ENCODE measurements at regions of chr19 and their contacts with region 1.

Region 1: DNA sequence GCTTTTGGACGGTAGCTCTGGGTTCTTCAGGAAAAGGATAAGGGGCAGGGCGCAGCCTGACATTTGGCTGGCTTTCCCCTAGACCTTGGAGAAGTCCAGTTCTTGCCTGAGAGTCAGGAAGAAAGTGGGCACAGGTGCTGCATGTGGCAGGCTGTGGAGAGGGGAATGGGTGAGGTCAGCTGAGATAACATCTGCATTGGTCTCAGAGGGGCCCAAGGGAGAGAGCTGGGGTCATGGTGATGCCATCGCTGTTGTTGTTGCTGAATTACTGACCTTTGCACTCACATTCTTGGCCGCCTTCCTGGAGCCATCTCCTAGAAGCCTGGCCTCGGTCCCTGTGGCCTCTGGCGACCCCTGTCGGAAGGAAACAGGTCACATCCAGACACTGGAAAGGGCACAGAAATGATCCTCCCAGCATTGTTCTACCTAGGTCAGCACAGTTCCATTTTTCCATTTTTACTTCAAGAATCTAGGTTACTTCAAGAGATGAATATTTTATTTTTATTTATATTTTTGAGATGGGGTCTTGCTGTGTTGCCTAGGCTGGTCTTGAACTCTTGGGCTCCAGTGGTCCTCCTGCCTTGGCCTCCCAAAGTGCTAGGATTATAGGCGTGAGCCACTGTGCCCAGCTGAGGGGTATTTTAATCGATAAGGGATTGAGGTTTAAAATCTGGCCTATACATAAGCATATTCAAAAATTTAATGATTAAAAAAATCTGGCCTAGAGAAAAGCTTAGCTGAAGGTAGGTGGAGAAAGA is 6.5 kb upstream of the LIPE start:
- DNase-seq: peak; percentile 90 to 91
- ATAC-seq: peak; percentile 91 to 96
- H3K4me3 ChIP-seq: no peak overlapping the region
- H3K27ac ChIP-seq: peak overlapping the region; percentile 58 to 75
- H3K4me1 ChIP-seq: peaks cover 21% of the 10 kb centered on the region
- CTCF ChIP-seq: peak; percentile 99
- EP300 ChIP-seq: no peak
- POLR2A ChIP-seq: no peak
- RAD21 ChIP-seq: peak; percentile 92 to 98

Region 2: DNA sequence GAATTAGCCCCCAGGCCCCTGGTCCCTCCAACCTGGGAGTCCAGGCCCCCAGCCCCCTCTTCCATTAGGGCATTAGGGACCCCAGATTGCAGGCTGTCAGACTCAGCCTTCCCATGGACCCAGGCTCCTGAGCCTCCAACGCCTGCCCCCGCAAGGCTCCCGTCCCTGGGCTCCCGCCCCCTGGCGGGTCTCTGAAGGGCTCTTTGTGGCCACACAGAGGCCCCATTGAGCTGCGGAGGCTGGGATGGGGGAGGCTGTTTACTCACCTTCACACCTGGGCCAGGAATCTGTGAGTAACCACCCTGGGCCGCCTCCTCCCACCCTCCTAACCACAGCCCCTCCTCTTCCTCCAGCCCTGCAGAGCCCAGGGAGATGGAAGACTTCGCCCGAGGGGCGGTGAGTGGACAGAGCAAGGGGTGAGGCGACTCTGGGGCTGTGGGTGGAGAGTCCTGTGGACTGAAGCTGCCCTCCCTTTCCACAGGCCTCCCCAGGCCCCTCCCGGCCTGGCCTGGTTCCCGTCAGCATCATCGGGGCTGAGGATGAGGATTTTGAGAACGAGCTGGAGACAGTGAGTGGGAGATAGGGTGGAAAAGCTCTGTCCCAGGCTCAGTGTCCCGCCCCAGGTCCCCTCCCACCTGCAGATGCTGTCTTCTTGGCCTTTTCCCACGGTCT is 545.8 kb before region 1 on chr19:
- CTCF ChIA-PET with region 1: no interaction called
- POLR2A ChIA-PET with region 1: no interaction called
- DNase-seq: no peak
- ATAC-seq: no peak
- H3K4me3 ChIP-seq: no peak overlapping the region
- H3K27ac ChIP-seq: 0 out of 6 replicates have a peak overlapping the region, but pooled peaks of 1 of the 2 experiments have one; percentile 0
- H3K4me1 ChIP-seq: peaks cover 15% of the 10 kb centered on the region
- CTCF ChIP-seq: no peak
- EP300 ChIP-seq: no peak
- POLR2A ChIP-seq: no peak
- RAD21 ChIP-seq: peak in 1 of 2 experiments; percentile 23; a peak in 2 of 5 replicates

Region 3: DNA sequence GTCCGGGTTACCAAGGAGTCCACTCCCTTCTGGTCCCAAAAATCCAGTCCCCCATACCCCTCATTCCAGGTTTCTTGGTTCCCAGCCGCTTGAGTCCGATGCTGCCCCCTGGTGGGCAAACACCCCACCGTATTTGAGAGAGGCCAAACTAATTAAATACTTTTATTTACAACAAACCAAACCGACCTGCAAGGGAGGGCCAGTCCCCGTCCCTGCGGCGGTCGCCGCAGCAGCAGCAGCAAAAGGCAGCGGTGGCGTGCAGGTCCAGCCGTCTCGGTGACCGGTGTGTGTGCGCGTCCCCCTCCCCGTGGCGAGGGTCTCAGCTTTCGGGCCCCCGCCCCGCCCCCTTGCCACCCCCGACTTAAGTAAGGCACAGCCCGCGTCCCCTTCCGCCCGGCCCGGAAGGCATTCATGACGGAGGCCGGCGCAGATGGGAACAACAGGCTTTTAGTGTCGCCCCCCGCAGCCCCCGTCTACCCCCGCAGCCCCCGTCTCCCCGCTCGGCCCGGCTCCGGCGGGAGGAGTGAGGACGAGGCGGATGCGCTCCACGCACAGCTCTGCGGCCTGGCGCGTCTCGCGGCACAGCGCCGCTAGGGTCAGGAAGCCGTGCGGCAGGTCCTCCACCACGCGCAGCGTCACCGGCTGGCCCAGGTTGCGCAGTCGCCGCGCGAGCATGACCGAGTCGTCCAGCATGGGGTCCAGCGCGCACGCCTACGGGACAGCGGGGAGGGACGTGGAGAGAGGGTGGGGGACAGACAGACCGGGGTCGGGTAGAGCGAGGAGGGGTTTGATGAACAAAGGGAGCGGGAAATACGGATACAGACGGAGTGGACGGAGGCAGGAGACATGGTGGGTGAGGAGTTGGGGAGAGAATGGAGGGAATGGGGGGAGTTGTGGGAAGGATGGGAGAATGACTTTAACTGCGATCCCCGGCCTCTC is 32.0 kb before region 1 on chr19:
- CTCF ChIA-PET with region 1: interaction called, 23 read pairs
- POLR2A ChIA-PET with region 1: interaction called, 3 read pairs
- DNase-seq: peak; percentile 89 to 96
- ATAC-seq: peak; percentile 63 to 75
- H3K4me3 ChIP-seq: peak overlapping the region; percentile 56
- H3K27ac ChIP-seq: peak overlapping the region; percentile 72 to 84
- H3K4me1 ChIP-seq: peaks cover 19% of the 10 kb centered on the region
- CTCF ChIP-seq: peak; percentile 99
- EP300 ChIP-seq: no peak
- POLR2A ChIP-seq: peak; percentile 91
- RAD21 ChIP-seq: peak in 1 of 2 experiments; percentile 67; a peak in 4 of 5 replicates

Measured in A549 (cell line).